ENCODE measurements at regions of chr10 and their contacts with region 1.

Region 1: DNA sequence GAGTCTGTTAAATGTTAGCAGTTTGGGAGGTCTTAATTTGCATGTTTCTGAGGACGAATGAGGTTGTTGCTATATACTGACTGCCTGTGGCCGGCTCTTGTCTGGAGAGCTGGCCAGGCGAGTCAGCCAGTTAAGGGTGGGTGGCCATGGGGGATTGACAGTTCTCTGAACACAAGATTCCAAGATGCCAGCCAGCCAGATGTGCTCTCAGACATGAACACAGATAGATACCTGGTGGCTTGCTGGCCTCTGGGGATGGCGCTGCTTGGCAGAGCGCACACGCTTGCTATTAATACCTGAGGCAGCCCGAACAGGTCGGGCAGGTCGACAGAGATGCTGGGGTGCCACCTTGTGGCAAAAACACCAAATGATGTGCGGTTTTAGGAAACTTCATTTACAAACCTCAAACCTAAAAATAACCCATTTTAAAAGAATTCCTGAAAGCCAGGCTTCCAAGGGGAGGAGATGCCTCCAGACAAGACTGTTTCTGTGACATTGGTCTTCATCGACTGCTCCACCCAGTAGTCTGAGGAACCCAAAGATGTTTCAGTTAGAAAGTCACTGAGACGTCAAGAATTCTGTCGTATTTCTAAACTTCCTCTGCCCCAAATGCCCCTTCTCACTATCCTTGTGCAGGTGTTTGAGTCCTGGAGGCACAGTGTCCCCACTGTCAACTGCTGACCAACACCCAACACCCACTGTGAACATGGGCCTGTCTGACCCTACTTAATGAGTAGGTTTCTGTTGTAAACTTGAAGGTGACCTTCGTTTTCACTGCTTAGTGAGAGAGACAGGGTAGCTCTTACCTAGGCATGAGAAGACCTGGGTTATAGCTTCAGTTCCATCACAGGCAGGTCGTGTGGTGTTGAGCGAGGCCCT is 123.4 kb downstream of the NT5C2 start:
- DNase-seq: peak; percentile 54
- H3K4me3 Mint-ChIP-seq: no peak overlapping the region
- H3K27ac Mint-ChIP-seq: peak overlapping the region; percentile 57
- H3K4me1 Mint-ChIP-seq: peaks cover 23% of the 10 kb centered on the region
- H3K27me3 Mint-ChIP-seq: peaks cover 2% of the 10 kb centered on the region

Region 2: DNA sequence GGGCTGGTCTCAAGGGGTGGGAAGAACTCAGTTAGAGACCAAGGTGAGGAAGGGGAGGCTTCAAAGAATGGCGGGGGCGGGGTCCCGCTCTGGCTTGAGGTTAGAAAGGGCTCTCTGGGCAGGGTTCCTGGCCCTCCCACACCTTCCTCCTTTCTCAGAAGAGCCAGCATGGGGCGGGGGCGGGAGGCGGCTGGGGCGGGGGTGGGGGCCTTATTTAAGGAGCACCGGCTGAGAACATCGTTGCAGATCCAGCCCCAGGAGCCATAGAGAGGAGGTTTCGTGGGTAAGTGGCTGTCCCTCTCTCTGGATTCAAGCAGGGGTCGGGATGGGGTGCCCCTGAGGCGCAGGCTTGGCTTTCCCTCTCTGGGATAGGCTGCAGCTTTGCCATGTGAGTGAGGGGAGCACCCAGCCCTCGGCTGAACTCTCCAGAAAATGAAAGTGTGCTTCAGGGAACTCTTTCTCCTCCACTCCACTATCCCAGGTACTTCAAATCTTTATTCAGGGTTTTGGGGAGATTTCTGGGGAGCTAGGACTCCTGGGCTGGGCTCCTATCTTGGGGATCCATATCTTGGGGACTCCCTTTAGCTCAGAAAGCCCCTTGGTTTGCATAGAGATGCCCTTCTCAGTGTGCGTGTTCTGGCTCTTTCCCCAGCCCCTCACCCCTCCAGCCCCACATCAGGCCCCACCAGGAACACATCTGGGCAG is 634.0 kb before region 1 on chr10:
- intact Hi-C with region 1: no loop called
- DNase-seq: peak; percentile 61
- H3K4me3 Mint-ChIP-seq: peak overlapping the region; percentile 98
- H3K27ac Mint-ChIP-seq: peak overlapping the region; percentile 86
- H3K4me1 Mint-ChIP-seq: peaks cover 62% of the 10 kb centered on the region
- H3K27me3 Mint-ChIP-seq: no peaks in the 10 kb centered on the region

Region 3: DNA sequence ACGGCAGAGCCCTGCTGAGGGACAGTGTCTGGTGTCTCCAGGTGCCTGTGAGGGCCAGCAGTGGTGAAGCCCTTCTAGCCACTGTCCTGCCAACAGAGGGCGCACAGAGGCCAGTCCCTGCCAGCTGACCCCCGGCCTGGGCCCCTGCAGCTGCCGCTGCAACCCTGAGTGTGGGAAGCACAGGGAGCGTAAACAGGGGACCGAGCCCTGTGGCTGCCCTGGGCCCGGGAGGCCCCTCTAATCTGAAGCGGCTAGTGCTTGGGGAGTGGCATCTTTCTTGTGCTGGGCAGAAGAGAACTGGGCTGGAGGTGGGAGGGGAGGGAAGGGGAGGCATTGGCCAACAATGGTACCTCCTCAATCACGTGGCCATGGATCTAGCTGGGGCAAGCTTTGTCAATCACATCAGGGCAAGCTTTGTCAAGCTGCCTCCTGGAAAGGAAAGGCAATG is 390.8 kb before region 1 on chr10:
- intact Hi-C with region 1: no loop called
- DNase-seq: no peak
- H3K4me3 Mint-ChIP-seq: no peak overlapping the region
- H3K27ac Mint-ChIP-seq: no peak overlapping the region
- H3K4me1 Mint-ChIP-seq: peaks cover 34% of the 10 kb centered on the region
- H3K27me3 Mint-ChIP-seq: no peaks in the 10 kb centered on the region

Region 4: GRCh38 chr10:102853944-102854694 is 215.6 kb before region 1 on chr10 and contains the start of gene BORCS7:
- intact Hi-C with region 1: loop called (anchors 1 kb)
- DNase-seq: peak; percentile 84
- H3K4me3 Mint-ChIP-seq: peak within 1 kb of the TSS; percentile 82
- H3K27ac Mint-ChIP-seq: peak within 1 kb of the TSS; percentile 92
- H3K4me1 Mint-ChIP-seq: peaks cover 19% of the 10 kb centered on the region
- H3K27me3 Mint-ChIP-seq: no peaks in the 10 kb centered on the region
- total RNA-seq, gene BORCS7: 9.7 and 12.6 TPM in 2 replicates

Region 5: DNA sequence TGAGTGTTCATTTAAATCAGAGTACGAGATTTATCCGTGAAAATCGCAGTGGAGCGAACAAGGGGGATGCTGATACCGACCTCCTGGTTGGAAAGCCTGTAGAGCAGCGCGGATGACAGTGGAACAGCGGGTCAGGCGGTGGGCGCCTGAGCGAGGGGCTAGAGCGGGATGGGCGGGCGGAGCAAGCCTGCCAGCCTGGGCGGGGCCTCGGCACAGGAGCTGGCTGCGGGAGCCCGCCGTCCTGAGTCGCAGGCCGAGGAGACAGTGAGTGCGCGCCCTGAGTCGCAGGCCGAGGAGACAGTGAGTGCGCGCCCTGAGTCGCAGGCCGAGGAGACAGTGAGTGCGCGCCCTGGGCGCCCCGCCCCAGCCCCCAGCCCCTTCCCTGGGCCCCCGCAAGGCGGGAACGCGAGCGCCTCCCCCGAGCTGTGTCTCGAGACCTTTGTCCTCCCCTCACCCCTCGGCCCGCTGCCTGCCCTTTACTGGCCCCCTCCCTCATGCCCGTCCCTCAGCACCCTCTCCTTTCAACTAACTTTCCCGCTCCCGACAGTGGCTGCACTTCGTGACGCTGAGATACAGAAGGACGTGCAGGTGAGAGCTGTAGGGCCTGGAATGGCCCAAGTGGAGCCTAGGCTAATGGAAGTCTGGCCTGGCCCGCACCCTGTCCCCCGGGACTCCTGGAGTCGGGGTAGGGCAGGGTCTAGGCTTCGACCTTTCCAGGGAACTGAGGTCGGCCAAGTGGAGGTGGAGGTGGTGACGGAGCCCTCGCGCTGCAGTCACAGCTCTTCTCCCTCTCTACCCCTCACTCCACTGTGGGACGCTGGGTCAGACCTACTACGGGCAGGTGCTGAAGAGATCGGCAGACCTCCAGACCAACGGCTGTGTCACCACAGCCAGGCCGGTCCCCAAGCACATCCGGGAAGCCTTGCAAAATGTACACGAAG is 200.2 kb before region 1 on chr10 and contains the start of gene AS3MT:
- intact Hi-C with region 1: no loop called
- DNase-seq: no peak
- H3K4me3 Mint-ChIP-seq: peak within 1 kb of the TSS; percentile 67
- H3K27ac Mint-ChIP-seq: no peak within 1 kb of the TSS
- H3K4me1 Mint-ChIP-seq: peaks cover 7% of the 10 kb centered on the region
- H3K27me3 Mint-ChIP-seq: peaks cover 27% of the 10 kb centered on the region
- total RNA-seq, gene AS3MT: 0.12 and 0.47 TPM in 2 replicates

Region 6: GRCh38 chr10:103053659-103054581 is 15.8 kb before region 1 on chr10:
- intact Hi-C with region 1: loop called (anchors 1 kb)
- DNase-seq: peak; percentile 69
- H3K4me3 Mint-ChIP-seq: peak overlapping the region; percentile 83
- H3K27ac Mint-ChIP-seq: peak overlapping the region; percentile 92
- H3K4me1 Mint-ChIP-seq: peaks cover 25% of the 10 kb centered on the region
- H3K27me3 Mint-ChIP-seq: no peaks in the 10 kb centered on the region

Region 7: GRCh38 chr10:103244663-103245271 is 175.1 kb after region 1 on chr10:
- intact Hi-C with region 1: loop called (anchors 1 kb)
- DNase-seq: peak; percentile 50
- H3K4me3 Mint-ChIP-seq: no peak overlapping the region
- H3K27ac Mint-ChIP-seq: no peak overlapping the region
- H3K4me1 Mint-ChIP-seq: peaks cover 31% of the 10 kb centered on the region
- H3K27me3 Mint-ChIP-seq: peaks cover 6% of the 10 kb centered on the region